Heart right ventricle (tissue), 16 donors: ENCODE measurements at regions of chr4 and their contacts with region 1.

Region 1: DNA sequence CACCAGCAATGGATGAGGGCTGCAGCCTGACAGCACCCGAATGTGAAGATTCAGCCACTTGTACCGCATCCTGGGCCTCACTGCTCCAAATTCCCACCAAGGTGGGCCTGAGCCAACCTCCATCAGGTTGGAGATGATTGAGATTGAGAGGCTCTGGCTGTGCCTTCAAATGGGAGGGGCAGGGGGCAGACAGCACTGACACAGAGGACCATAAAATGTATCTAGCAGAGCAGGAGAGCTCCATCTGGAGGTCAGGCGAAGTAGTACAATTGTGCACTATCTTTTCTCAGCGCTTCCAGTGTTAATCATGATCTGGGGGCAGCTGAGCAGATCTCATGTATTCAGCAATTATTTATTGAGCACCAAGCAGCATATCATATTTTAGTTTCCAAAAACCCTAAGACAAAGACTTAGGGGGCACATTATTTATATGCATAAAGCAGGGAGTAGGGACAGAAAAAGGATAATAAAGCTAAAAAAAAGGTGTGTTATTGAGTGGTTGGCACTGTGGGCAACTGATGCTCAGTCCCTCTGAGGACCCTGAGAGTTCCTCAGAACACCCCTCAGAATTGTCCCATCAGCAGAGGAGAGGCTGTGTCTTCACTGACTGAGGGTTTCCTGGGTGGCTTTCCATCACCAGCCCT is 31.6 kb upstream of the C1QTNF7 start:
- DNase-seq: no peak
- ATAC-seq: peak in 2 of 8 donors; percentile 36 to 47
- H3K4me3 ChIP-seq: no peak overlapping the region
- H3K27ac ChIP-seq: peak overlapping the region in 1 of 10 donors; percentile 58
- H3K4me1 ChIP-seq: peaks cover 0 to 32% (median 15%) of the 10 kb centered on the region in 9 donors
- H3K27me3 ChIP-seq: no peaks in the 10 kb centered on the region
- CTCF ChIP-seq: peak; percentile 25 to 80 (median 64)

Region 2: DNA sequence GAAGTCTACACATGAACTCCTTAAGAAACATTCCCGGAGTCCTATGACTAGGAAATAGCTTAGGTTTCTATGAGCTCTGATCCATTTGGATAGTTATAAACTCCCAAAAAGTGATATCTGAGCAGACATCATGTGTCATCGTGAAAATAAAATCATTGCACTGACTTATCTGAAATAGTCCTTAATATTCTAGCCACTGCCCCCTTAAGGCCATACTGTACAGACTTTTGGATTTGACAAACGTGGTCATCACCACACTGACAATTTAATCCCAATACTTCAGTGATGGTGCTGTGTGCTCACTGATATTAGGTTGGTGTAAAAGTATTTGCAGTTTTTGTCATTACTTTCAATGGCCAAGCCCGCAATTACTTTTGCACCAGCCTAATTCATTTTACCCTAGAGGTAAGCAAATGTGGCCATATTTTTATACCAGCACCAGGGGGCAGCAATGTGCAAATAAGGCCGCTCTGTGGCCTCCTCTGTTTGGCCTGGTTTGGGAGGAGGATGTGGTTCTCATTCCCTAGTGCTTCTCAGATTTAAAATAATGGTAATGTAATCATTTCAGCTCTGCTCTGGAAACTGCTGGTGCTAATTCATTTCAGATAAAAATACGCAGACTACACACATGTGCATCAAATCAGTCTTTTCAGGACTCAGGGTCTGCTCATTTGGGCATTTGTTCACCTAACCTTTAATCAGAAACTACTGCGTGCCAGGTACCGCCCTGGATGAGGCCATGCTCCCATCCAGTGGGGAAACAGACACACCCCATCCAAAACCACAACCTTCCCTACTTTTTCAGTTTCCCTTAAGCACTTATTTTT is 164.8 kb before region 1 on chr4:
- intact Hi-C with region 1: loop called in 6 of 10 experiments (anchors 5 to 10 kb)
- DNase-seq: peak; percentile 44 to 86
- ATAC-seq: peak; percentile 81 to 87 (median 82)
- H3K4me3 ChIP-seq: no peak overlapping the region
- H3K27ac ChIP-seq: peak overlapping the region in 2 of 10 donors; percentile 17 to 50
- H3K4me1 ChIP-seq: peaks cover 3 to 37% (median 27%) of the 10 kb centered on the region in 9 donors
- H3K27me3 ChIP-seq: no peaks in the 10 kb centered on the region
- CTCF ChIP-seq: peak; percentile 65 to 83 (median 71)

Region 3: GRCh38 chr4:15238720-15239119 is 157.6 kb before region 1 on chr4:
- intact Hi-C with region 1: loop called in 8 of 10 experiments (anchors 2 to 10 kb)
- DNase-seq: peak in 1 of 2 donors; percentile 20
- ATAC-seq: peak in 7 of 8 donors; percentile 52 to 77 (median 68)
- H3K4me3 ChIP-seq: no peak overlapping the region
- H3K27ac ChIP-seq: no peak overlapping the region
- H3K4me1 ChIP-seq: peaks cover 0 to 34% (median 10%) of the 10 kb centered on the region in 9 donors
- H3K27me3 ChIP-seq: no peaks in the 10 kb centered on the region
- CTCF ChIP-seq: peak; percentile 22 to 67 (median 61)

Region 4: GRCh38 chr4:15469402-15470127 is 73.3 kb after region 1 on chr4 and contains the start of gene CC2D2A:
- intact Hi-C with region 1: no loop called
- DNase-seq: no peak
- ATAC-seq: peak; percentile 89 to 95 (median 92)
- H3K4me3 ChIP-seq: peak within 1 kb of the TSS; percentile 42 to 70 (median 61)
- H3K27ac ChIP-seq: peak within 1 kb of the TSS in 9 of 10 donors; percentile 3 to 75 (median 50)
- H3K4me1 ChIP-seq: peaks cover 0 to 41% (median 21%) of the 10 kb centered on the region in 9 donors
- H3K27me3 ChIP-seq: no peaks in the 10 kb centered on the region
- CTCF ChIP-seq: no peak
- total RNA-seq, gene CC2D2A: 4.0 to 10.8 (median 8.3) TPM